Aorta (tissue), 5 donors: ENCODE measurements at regions of chr7 and their contacts with region 1.

Region 1: DNA sequence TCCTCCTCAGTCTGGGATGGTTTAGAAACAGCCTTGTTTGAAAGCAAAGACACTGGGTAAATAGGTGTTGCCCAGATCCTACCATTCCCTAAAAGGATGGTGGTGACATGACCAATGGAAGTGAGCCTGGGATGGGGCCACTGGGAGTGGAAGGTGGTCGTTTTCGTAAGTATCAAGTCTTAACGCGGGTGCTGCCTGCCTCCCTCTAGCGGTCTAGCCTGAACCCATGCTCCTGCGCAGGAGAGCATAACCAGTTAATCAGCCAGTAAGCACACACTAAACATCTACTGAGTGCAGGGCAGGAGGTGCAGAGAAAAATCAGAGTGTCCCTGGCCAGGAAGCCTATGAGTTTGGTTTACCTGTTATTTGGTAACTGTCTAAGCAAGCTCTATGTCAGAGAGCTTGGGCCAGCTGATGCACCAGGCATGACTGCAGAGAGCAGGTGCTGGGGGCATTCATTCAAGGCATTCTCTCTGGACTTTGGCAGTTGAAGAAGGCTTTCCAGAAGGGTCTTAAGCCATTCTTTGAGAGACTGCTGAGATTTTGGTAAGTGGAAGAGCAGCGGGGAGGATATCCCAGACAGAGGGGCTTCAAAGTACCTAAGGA is 923 bp downstream of the GARIN1A start:
- DNase-seq: no peak
- ATAC-seq: no peak
- H3K4me3 ChIP-seq: no peak overlapping the region
- H3K27ac ChIP-seq: no peak overlapping the region
- H3K4me1 ChIP-seq: peaks cover 0 to 2% of the 10 kb centered on the region in 2 donors
- H3K27me3 ChIP-seq: no peaks in the 10 kb centered on the region

Region 2: GRCh38 chr7:128728598-128728997 is 55.6 kb after region 1 on chr7:
- intact Hi-C with region 1: loop called in 1 of 2 experiments (anchors 10 kb)
- DNase-seq: no peak
- ATAC-seq: no peak
- H3K4me3 ChIP-seq: no peak overlapping the region
- H3K27ac ChIP-seq: no peak overlapping the region
- H3K4me1 ChIP-seq: no peaks in the 10 kb centered on the region
- H3K27me3 ChIP-seq: no peaks in the 10 kb centered on the region

Region 3: DNA sequence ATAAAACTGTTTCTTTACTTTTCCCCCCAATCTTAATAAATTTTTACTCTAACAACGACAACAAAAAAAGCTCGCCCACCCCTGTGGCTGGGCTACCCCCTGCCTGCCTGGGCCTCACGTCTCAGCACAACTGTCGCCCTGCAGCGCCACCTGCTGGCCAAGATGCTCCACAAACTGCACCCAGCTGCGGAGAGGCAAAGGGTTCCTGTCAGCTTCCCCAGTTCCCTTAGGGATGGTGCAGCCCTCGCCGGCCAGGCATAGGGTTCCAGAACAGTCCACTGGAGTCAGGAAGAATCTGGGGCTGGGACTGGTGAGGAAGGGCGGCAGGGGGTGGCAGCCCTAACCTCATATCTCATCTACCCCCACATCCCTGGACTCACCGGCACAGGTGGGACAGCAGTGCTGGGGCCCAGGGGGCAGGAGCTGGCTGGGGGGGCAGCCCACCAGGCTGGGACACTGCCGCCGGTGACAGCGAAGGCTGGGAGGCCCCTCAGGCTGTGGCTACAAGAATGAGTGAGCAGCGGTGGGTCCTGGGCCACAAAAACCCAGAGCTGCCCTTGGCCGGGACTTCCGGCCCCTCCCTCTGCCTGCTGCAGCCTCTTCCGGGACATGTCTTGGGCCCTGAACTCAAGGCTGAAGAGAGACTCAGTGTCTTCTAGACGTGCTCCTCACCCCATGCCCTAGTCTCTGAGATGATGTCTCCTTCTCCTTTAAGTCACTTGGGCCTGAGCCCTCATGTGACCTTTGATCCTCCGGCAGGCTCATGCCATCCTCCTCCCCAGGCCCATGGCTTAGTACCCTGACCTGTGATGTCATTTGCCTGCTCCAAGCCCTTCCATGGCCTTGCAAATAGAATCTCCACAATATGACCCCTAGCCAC is 210.8 kb after region 1 on chr7:
- intact Hi-C with region 1: loop called in 1 of 2 experiments (anchors 5 kb)
- DNase-seq: peak; percentile 87 to 96
- ATAC-seq: peak; percentile 71
- H3K4me3 ChIP-seq: no peak overlapping the region
- H3K27ac ChIP-seq: no peak overlapping the region
- H3K4me1 ChIP-seq: no peaks in the 10 kb centered on the region
- H3K27me3 ChIP-seq: no peaks in the 10 kb centered on the region

Region 4: GRCh38 chr7:128937647-128938543 is 264.9 kb after region 1 on chr7 and contains the start of gene IRF5:
- intact Hi-C with region 1: no loop called
- DNase-seq: peak; percentile 74 to 85
- ATAC-seq: peak; percentile 49
- H3K4me3 ChIP-seq: peak within 1 kb of the TSS; percentile 60 to 71
- H3K27ac ChIP-seq: no peak within 1 kb of the TSS
- H3K4me1 ChIP-seq: no peaks in the 10 kb centered on the region
- H3K27me3 ChIP-seq: no peaks in the 10 kb centered on the region
- total RNA-seq, gene IRF5: 9.6 to 15.5 TPM